Ascending aorta (tissue), 2 donors: ENCODE measurements at regions of chr19 and their contacts with region 1.

Region 1: GRCh38 chr19:58519355-58520256 is at the start of gene ZBTB45:
- DNase-seq: peak; percentile 70 to 96
- H3K4me3 ChIP-seq: peak within 1 kb of the TSS; percentile 87 to 90
- H3K27ac ChIP-seq: peak within 1 kb of the TSS; percentile 94 to 96
- H3K4me1 ChIP-seq: peaks cover 20 to 29% of the 10 kb centered on the region in 2 donors
- H3K27me3 ChIP-seq: no peaks in the 10 kb centered on the region
- CTCF ChIP-seq: peak; percentile 76 to 94 (median 93)
- total RNA-seq, gene ZBTB45: 46.5 TPM

Region 2: GRCh38 chr19:58326914-58327726 is 192.5 kb before region 1 on chr19 and contains the start of gene ZSCAN22:
- intact Hi-C with region 1: loop called (anchors 1 kb)
- DNase-seq: peak; percentile 78 to 98
- H3K4me3 ChIP-seq: peak within 1 kb of the TSS; percentile 91 to 92
- H3K27ac ChIP-seq: peak within 1 kb of the TSS; percentile 91 to 96
- H3K4me1 ChIP-seq: peaks cover 4 to 13% of the 10 kb centered on the region in 2 donors
- H3K27me3 ChIP-seq: no peaks in the 10 kb centered on the region
- CTCF ChIP-seq: no peak
- total RNA-seq, gene ZSCAN22: 1.9 TPM

Region 3: GRCh38 chr19:58380722-58381466 is 138.7 kb before region 1 on chr19 and contains the start of gene ZNF837:
- intact Hi-C with region 1: loop called (anchors 1 kb)
- DNase-seq: peak; percentile 99
- H3K4me3 ChIP-seq: peak within 1 kb of the TSS; percentile 82 to 86
- H3K27ac ChIP-seq: peak within 1 kb of the TSS; percentile 84 to 91
- H3K4me1 ChIP-seq: peaks cover 8 to 24% of the 10 kb centered on the region in 2 donors
- H3K27me3 ChIP-seq: no peaks in the 10 kb centered on the region
- CTCF ChIP-seq: no peak
- total RNA-seq, gene ZNF837: not detected

Region 4: GRCh38 chr19:58408152-58409009 is 111.2 kb before region 1 on chr19 and contains the start of gene ZNF584:
- intact Hi-C with region 1: no loop called
- DNase-seq: peak; percentile 76 to 97
- H3K4me3 ChIP-seq: peak within 1 kb of the TSS; percentile 97
- H3K27ac ChIP-seq: peak within 1 kb of the TSS; percentile 86 to 93
- H3K4me1 ChIP-seq: peaks cover 3 to 16% of the 10 kb centered on the region in 2 donors
- H3K27me3 ChIP-seq: no peaks in the 10 kb centered on the region
- CTCF ChIP-seq: no peak
- total RNA-seq, gene ZNF584: 17.9 TPM

Region 5: DNA sequence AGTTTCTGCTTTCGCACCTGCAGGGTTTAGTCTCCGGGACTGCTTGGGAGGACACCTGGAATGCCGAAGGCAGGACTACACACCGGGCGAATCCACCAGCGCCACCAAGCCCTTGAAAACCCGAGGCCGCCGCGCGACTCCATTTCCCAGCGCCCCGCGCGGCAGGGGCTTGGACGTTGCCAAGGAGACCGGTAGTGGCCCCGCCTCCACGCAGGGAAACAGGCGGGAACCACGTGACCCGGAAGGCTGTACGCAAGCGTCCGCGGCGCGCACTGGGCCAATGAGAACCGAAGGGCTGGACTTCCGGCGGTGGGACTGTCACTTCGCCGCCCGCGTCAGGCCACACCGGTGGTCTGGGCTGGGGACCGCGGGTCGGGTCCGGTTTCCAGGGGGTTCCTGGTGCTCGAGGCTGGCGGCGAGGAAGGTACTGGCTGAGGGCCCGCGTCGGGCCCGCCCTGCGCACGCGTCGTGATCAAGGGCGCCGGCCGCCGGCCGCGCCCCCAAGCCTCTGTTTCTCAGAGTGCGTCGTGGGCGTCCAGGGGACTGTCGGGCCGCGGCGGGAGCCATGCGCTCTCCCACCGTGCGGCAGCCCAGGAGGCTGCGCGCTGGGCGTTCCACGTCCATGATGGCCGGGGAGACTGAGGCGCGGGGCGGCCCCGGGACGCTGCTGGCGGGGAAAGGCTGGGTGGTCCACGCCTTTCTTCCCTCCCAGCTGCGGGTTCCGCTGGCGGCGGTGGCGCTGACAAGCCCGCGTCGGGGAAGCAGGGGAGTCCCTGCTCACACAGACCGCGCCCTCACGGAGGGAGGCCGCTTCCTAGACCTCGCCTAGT is 52.6 kb before region 1 on chr19 and contains the start of gene ZNF324:
- intact Hi-C with region 1: loop called (anchors 2 kb)
- DNase-seq: peak; percentile 93 to 99
- H3K4me3 ChIP-seq: peak within 1 kb of the TSS; percentile 95 to 96
- H3K27ac ChIP-seq: peak within 1 kb of the TSS; percentile 84 to 88
- H3K4me1 ChIP-seq: peaks cover 0 to 10% of the 10 kb centered on the region in 2 donors
- H3K27me3 ChIP-seq: no peaks in the 10 kb centered on the region
- CTCF ChIP-seq: no peak
- total RNA-seq, gene ZNF324: 2.1 TPM

Region 6: GRCh38 chr19:58543826-58544590 is 24.4 kb after region 1 on chr19 and contains the start of gene TRIM28:
- intact Hi-C with region 1: loop called (anchors 1 kb)
- DNase-seq: peak; percentile 95 to 99
- H3K4me3 ChIP-seq: peak within 1 kb of the TSS; percentile 75 to 82
- H3K27ac ChIP-seq: peak within 1 kb of the TSS; percentile 90 to 94
- H3K4me1 ChIP-seq: peaks cover 15 to 25% of the 10 kb centered on the region in 2 donors
- H3K27me3 ChIP-seq: no peaks in the 10 kb centered on the region
- CTCF ChIP-seq: peak in 1 of 3 experiments; percentile 6
- total RNA-seq, gene TRIM28: 222 TPM

Region 7: GRCh38 chr19:58572818-58573657 is 53.4 kb after region 1 on chr19 and contains the start of gene MZF1:
- intact Hi-C with region 1: loop called (anchors 1 kb)
- DNase-seq: peak; percentile 100
- H3K4me3 ChIP-seq: peak within 1 kb of the TSS; percentile 81 to 92
- H3K27ac ChIP-seq: peak within 1 kb of the TSS; percentile 95 to 98
- H3K4me1 ChIP-seq: peaks cover 4 to 20% of the 10 kb centered on the region in 2 donors
- H3K27me3 ChIP-seq: no peaks in the 10 kb centered on the region
- CTCF ChIP-seq: no peak
- total RNA-seq, gene MZF1: 77.1 TPM